GM12878 (cell line): ENCODE measurements at regions of chr20 and their contacts with region 1.

Region 1: DNA sequence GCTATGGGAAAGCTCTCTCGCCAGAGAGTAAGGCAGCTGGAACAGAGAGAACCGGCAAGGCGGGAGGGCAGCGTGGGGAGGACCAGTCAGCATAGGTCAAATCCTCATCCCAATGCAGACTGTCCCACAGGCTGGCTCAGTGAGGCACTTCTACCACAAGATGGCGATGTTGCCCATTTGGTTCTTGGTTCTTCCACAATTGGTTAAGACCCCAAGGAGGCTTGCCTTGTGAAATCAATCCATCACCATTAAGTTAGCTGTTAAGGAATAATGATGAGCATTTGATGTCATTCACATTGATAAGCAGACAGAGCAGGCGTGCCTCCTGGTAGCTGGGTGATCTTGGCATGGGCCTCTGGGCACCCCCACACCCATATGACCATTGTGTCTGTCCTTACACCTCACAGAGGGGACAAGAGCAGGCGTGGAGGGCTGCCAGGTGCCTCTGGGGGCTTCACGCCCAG is 2.4 kb downstream of the CSTL1 start:
- DNase-seq: peak; percentile 43
- ATAC-seq: peak; percentile 89
- H3K4me3 ChIP-seq: no peak overlapping the region
- H3K27ac ChIP-seq: no peak overlapping the region
- H3K4me1 ChIP-seq: peaks cover 3% of the 10 kb centered on the region; the same call in 1 of the 2 replicates
- H3K27me3 ChIP-seq: no peaks in the 10 kb centered on the region
- CTCF ChIP-seq: peak; percentile 86 to 89 (median 88)
- EP300 ChIP-seq: no peak
- POLR2A ChIP-seq: no peak
- RAD21 ChIP-seq: peak; percentile 80

Region 2: DNA sequence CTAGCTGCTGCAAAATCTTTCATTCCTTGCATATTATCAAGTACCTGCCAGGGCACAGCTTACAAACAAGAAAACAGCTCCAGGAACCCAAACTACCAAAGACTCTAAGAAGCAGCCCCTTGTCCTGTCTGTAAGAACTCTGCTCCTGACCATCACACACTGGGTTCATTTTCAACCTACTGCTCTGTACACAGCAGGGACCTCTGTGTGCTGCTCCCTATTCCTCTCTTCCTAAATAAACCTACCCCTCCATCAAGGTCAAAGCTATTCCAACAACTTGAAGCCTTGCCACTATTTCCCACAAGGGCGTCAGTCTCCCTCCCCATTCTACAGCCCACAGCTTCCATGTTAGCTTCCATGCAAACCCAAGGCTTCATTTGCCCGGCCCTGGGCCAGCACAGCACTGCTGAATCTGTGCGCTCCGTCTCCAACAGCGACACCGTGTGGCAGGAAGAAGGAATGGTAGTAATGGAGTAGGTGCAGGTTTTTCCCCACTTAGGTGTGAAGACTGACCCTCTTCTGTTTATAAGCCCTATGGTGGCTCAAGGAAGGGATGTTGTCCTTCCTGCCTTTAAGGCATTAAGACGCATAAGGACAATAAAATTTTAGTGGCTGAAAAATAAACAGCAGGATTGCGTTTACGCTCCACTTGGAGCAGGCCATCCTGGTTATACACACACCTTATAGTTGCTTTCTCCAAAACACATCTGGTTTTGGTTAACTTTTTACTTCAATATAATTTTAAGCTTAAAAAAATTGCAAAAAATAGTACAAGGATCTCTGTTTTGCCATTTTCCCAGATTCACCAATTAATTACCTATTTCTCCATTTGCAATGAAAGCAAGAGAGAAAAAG is 206.5 kb before region 1 on chr20:
- CTCF ChIA-PET with region 1: interaction called, 12 read pairs
- POLR2A ChIA-PET with region 1: no interaction called
- RAD21 ChIA-PET with region 1: no interaction called
- SMC1A ChIA-PET with region 1: no interaction called
- in situ Hi-C with region 1: no loop called
- intact Hi-C with region 1: no loop called
- DNase-seq: no peak
- ATAC-seq: peak; percentile 94
- H3K4me3 ChIP-seq: no peak overlapping the region
- H3K27ac ChIP-seq: no peak overlapping the region
- H3K4me1 ChIP-seq: no peaks in the 10 kb centered on the region
- H3K27me3 ChIP-seq: no peaks in the 10 kb centered on the region
- CTCF ChIP-seq: peak; percentile 74 to 77 (median 74)
- EP300 ChIP-seq: no peak
- POLR2A ChIP-seq: no peak
- RAD21 ChIP-seq: peak; percentile 91

Region 3: GRCh38 chr20:23350196-23350903 is 91.5 kb before region 1 on chr20 and contains the start of gene NXT1:
- CTCF ChIA-PET with region 1: interaction called, 18 read pairs
- POLR2A ChIA-PET with region 1: interaction called, 4 read pairs
- RAD21 ChIA-PET with region 1: interaction called, 23 read pairs
- SMC1A ChIA-PET with region 1: interaction called, 8 read pairs
- in situ Hi-C with region 1: no loop called
- intact Hi-C with region 1: no loop called
- DNase-seq: peak; percentile 92
- ATAC-seq: peak; percentile 92
- H3K4me3 ChIP-seq: peak within 1 kb of the TSS; percentile 89
- H3K27ac ChIP-seq: peak within 1 kb of the TSS; percentile 95
- H3K4me1 ChIP-seq: peaks cover 4% of the 10 kb centered on the region
- H3K27me3 ChIP-seq: no peaks in the 10 kb centered on the region
- CTCF ChIP-seq: peak in 2 of 3 experiments; percentile 16 to 18; a peak in 1 of 6 replicates
- EP300 ChIP-seq: peak in 1 of 2 experiments; percentile 12; a peak in 2 of 4 replicates
- POLR2A ChIP-seq: peak; percentile 83
- RAD21 ChIP-seq: no peak
- polyA plus RNA-seq, gene NXT1: 10.2 to 24.2 TPM

Region 4: DNA sequence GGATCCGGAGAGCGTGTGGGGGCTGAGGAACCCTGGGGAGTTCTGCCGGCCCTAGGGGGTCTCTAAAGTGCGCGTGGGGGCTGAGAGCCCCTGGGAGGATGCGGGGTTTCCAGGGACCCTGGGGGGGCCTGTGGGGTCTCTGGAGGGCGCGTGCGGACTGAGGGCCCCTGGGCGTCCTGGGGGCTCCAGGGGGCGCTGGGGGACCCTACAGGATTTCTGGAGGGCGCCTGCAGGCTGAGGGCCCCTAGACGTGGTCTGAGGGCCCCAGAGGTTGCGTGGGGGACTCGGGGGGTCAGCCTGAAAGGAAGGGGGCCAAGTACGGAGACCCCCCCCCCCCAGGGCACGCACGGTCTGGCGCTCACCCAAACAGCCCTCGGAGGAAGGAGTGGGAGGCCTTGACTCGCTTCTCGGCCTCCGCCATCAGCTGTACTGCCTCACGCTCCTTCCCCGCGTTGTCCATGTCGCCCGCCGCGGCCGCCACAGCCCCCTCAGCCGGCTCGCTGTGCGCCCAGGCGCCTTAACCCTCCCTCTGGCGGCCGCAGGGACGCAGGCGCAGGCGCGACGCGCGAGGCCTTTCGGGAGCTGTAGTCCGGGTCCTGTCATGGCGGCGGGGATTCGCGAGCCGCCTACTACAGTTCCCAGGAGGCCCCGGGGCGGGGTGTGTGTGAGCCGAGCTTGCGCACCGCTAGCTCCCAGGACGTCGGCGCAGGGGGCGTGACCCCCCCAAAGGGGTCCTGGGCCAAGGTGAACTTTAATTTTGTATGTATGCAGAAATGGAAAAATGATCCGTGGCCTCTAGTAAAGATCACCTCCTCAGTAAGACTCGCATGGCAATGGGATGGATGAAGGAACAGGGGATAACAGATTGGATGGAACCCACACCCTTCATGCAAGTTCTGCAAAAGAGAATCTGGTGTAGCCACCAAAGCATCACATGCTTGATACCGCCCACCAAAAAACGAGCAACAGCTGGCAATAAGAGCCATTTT is 20.6 kb before region 1 on chr20 and contains the start of gene NAPB:
- CTCF ChIA-PET with region 1: interaction called, 21 read pairs
- POLR2A ChIA-PET with region 1: no interaction called
- RAD21 ChIA-PET with region 1: interaction called, 3 read pairs
- SMC1A ChIA-PET with region 1: no interaction called
- in situ Hi-C with region 1: no loop called
- intact Hi-C with region 1: no loop called
- DNase-seq: peak; percentile 68
- ATAC-seq: peak; percentile 99
- H3K4me3 ChIP-seq: peak within 1 kb of the TSS; percentile 91
- H3K27ac ChIP-seq: peak within 1 kb of the TSS; percentile 86
- H3K4me1 ChIP-seq: peaks cover 11% of the 10 kb centered on the region
- H3K27me3 ChIP-seq: no peaks in the 10 kb centered on the region
- CTCF ChIP-seq: peak in 2 of 3 experiments; percentile 10 to 37; a peak in 1 of 6 replicates
- EP300 ChIP-seq: peak in 1 of 2 experiments; percentile 29; a peak in 1 of 4 replicates
- POLR2A ChIP-seq: peak; percentile 94
- RAD21 ChIP-seq: no peak
- polyA plus RNA-seq, gene NAPB: 2.1 to 2.3 TPM

Region 5: GRCh38 chr20:23459461-23460150 is 17.7 kb after region 1 on chr20:
- CTCF ChIA-PET with region 1: interaction called, 12 read pairs
- POLR2A ChIA-PET with region 1: interaction called, 3 read pairs
- RAD21 ChIA-PET with region 1: no interaction called
- SMC1A ChIA-PET with region 1: interaction called, 3 read pairs
- in situ Hi-C with region 1: no loop called
- intact Hi-C with region 1: no loop called
- DNase-seq: no peak
- ATAC-seq: no peak
- H3K4me3 ChIP-seq: no peak overlapping the region
- H3K27ac ChIP-seq: no peak overlapping the region
- H3K4me1 ChIP-seq: no peaks in the 10 kb centered on the region
- H3K27me3 ChIP-seq: peaks cover 2% of the 10 kb centered on the region in 2 experiments; a peak in 1 of 4 replicates
- CTCF ChIP-seq: no peak
- EP300 ChIP-seq: no peak
- POLR2A ChIP-seq: no peak
- RAD21 ChIP-seq: no peak

Region 6: DNA sequence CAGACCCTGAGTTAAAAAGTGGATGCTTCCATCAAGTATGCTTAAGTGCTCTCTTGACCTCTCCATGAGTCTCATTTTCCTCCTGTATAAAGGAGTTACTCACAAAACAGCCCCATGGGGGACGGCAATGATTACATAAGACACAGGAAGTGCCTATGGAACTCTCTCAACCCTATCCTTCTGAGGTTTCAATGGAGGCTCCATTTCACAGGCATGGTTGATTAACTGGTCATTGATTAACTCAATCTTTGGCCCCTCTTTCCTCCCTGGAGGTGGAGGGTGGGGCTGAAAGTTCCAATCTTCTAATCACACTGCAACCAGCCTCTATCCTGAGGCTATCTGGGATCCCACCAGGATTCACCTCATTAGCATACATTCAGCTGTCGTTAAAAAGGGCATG is 78.3 kb after region 1 on chr20:
- CTCF ChIA-PET with region 1: no interaction called
- POLR2A ChIA-PET with region 1: no interaction called
- RAD21 ChIA-PET with region 1: no interaction called
- SMC1A ChIA-PET with region 1: no interaction called
- in situ Hi-C with region 1: no loop called
- intact Hi-C with region 1: no loop called
- DNase-seq: no peak
- ATAC-seq: peak; percentile 33; the same call in 1 of the 3 replicates
- H3K4me3 ChIP-seq: no peak overlapping the region
- H3K27ac ChIP-seq: no peak overlapping the region
- H3K4me1 ChIP-seq: no peaks in the 10 kb centered on the region
- H3K27me3 ChIP-seq: no peaks in the 10 kb centered on the region; a peak in 2 of 4 replicates
- CTCF ChIP-seq: no peak
- EP300 ChIP-seq: no peak
- POLR2A ChIP-seq: no peak
- RAD21 ChIP-seq: no peak

Region 7: GRCh38 chr20:23606652-23607049 is 164.8 kb after region 1 on chr20:
- CTCF ChIA-PET with region 1: interaction called, 44 read pairs
- POLR2A ChIA-PET with region 1: no interaction called
- RAD21 ChIA-PET with region 1: interaction called, 11 read pairs
- SMC1A ChIA-PET with region 1: interaction called, 6 read pairs
- in situ Hi-C with region 1: loop called (anchors 5 kb)
- intact Hi-C with region 1: loop called (anchors 1 kb)
- DNase-seq: no peak
- ATAC-seq: peak; percentile 99
- H3K4me3 ChIP-seq: no peak overlapping the region
- H3K27ac ChIP-seq: no peak overlapping the region
- H3K4me1 ChIP-seq: no peaks in the 10 kb centered on the region
- H3K27me3 ChIP-seq: no peaks in the 10 kb centered on the region
- CTCF ChIP-seq: peak; percentile 91 to 96 (median 91)
- EP300 ChIP-seq: no peak
- POLR2A ChIP-seq: no peak
- RAD21 ChIP-seq: peak; percentile 87

Region 8: DNA sequence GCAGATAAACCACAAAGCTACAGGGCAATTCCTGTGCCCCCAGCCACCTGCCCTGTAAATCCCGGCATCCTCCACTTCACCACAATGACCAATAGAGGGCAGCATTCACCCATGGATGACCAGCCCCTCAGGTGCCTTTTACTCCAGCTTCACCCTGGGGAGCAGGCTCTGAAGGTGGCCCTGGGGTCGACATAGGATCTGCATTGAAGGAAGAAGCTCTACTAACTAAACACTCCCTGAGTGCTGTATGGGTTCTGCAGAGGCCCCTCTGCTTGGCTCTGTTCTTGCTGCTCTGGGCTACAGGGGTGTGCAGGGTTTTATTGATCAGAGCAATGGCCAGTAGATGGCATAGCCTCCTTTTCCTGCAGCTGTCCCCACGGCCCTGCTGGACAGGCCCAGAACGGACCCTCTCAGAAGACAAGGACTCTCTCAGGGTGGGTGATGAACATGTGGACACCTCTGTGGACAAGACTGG is 226.6 kb after region 1 on chr20:
- CTCF ChIA-PET with region 1: no interaction called
- POLR2A ChIA-PET with region 1: no interaction called
- RAD21 ChIA-PET with region 1: no interaction called
- SMC1A ChIA-PET with region 1: no interaction called
- in situ Hi-C with region 1: no loop called
- intact Hi-C with region 1: loop called (anchors 5 kb)
- DNase-seq: no peak
- ATAC-seq: peak; percentile 96
- H3K4me3 ChIP-seq: no peak overlapping the region
- H3K27ac ChIP-seq: no peak overlapping the region
- H3K4me1 ChIP-seq: no peaks in the 10 kb centered on the region
- H3K27me3 ChIP-seq: no peaks in the 10 kb centered on the region
- CTCF ChIP-seq: peak; percentile 73 to 83 (median 79)
- EP300 ChIP-seq: no peak
- POLR2A ChIP-seq: no peak
- RAD21 ChIP-seq: peak; percentile 81